ENCODE measurements at regions of chr7 and their contacts with region 1.

Region 1: GRCh38 chr7:143416565-143417149 is 8.0 kb upstream of the EPHA1 start:
- DNase-seq: no peak
- H3K4me3 ChIP-seq: no peak overlapping the region
- H3K27ac ChIP-seq: no peak overlapping the region
- H3K4me1 ChIP-seq: peaks cover 17% of the 10 kb centered on the region
- H3K27me3 ChIP-seq: no peaks in the 10 kb centered on the region
- CTCF ChIP-seq: peak; percentile 43 to 80 (median 58)
- POLR2A ChIP-seq: no peak

Region 2: DNA sequence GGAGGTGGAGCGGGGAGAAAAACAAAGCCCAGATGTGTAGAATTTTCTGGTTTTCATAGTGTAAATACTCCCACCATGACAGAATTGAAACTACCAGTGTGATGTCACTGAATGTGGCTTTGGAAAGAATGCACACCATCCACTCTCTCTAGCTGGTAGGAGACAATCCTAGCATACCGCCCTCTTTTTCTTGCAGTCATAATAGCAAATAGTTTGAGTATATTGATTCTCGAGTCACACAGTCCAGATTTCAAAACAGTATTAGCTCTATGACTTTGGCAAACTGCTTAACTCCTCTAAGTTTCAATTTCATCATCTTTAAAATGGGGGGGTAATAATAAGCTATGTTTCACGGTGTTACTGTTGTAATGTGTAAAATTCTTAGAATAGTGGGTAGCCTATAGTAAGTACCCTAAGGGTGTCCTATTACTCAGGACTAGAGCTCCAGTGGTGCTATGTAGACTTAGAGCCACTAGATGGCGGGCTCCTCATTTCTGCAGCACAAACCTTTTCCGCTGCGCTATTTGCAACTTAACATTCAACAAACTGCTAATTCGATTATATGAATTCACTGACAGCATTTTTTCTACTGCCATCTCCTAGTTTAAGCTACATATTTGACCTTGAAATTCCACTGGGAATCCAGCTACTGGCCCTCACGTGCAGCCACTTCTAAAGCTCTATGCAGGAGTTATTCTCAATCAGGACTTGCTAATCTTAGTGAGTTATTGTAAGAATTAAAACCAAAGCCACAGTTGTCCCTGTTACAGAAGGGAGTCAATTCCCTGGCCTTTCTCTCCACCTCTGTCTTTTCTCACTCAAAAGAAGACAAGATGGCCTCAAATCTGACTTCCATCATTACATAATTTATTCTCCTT is 176.1 kb before region 1 on chr7:
- intact Hi-C with region 1: loop called (anchors 10 kb)
- DNase-seq: no peak
- H3K4me3 ChIP-seq: no peak overlapping the region
- H3K27ac ChIP-seq: no peak overlapping the region
- H3K4me1 ChIP-seq: no peaks in the 10 kb centered on the region
- H3K27me3 ChIP-seq: no peaks in the 10 kb centered on the region
- CTCF ChIP-seq: peak; percentile 71 to 86 (median 73)
- POLR2A ChIP-seq: no peak

Region 3: GRCh38 chr7:143362131-143363015 is 54.3 kb before region 1 on chr7 and contains the start of gene FAM131B:
- intact Hi-C with region 1: loop called (anchors 10 kb)
- DNase-seq: no peak
- H3K4me3 ChIP-seq: peak within 1 kb of the TSS; percentile 62 to 75
- H3K27ac ChIP-seq: no peak within 1 kb of the TSS
- H3K4me1 ChIP-seq: peaks cover 11% of the 10 kb centered on the region
- H3K27me3 ChIP-seq: no peaks in the 10 kb centered on the region
- CTCF ChIP-seq: no peak
- POLR2A ChIP-seq: no peak
- total RNA-seq, gene FAM131B: 1.5 TPM

Measured in vagina (tissue), 2 donors.